H1 (cell line): ENCODE measurements at regions of chr5 and their contacts with region 1.

Region 1: DNA sequence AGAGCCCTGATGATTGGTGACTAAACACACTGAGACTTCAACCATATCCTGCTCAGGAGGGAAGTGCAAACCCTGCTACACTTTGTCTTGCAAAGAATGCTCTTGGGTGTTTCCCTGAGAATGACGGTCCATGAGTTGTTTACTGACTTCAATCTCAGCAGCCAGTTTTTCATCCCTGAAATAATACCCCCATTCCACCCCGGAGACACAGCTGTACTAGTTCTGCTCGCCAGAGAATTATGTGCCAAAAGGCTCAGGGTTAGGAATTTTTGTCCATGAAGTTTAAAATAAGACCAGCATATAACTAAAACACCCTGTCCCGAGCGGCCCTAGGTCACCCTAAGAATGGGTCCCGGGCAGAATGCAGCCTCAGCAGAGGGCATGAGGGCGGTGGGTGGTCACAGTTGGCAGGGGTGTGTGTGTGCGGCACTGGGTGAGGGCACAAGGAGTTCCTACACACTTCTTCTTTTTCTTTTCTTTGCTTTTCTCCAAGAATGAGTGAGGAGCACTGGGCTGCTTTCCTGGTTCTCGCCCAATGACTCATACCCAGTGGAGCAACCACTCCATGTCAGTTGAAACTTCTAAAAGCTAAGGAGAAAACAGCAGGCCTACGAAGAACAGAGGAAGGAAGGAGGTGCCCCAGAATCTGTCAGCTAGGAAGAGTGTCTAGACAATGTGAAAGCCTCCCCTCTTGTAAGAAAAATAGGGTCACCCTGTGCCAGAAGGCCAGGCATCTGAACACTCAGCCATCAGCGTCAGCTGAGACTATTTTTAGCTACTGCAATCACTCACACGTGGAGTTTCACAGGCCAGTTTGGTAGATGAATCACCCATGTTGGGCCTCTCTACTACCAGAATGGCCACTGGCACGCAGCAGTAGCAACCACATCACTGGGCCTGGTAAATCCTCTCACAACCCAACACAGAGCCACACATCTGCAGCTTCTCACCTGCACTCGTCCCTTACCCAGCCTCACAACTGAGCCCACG is 105.9 kb downstream of the DPYSL3 start:
- DNase-seq: no peak
- H3K4me3 ChIP-seq: no peak overlapping the region
- H3K27ac ChIP-seq: no peak overlapping the region
- H3K4me1 ChIP-seq: no peaks in the 10 kb centered on the region
- H3K27me3 ChIP-seq: no peaks in the 10 kb centered on the region
- CTCF ChIP-seq: no peak
- EP300 ChIP-seq: no peak
- POLR2A ChIP-seq: no peak
- RAD21 ChIP-seq: no peak

Region 2: DNA sequence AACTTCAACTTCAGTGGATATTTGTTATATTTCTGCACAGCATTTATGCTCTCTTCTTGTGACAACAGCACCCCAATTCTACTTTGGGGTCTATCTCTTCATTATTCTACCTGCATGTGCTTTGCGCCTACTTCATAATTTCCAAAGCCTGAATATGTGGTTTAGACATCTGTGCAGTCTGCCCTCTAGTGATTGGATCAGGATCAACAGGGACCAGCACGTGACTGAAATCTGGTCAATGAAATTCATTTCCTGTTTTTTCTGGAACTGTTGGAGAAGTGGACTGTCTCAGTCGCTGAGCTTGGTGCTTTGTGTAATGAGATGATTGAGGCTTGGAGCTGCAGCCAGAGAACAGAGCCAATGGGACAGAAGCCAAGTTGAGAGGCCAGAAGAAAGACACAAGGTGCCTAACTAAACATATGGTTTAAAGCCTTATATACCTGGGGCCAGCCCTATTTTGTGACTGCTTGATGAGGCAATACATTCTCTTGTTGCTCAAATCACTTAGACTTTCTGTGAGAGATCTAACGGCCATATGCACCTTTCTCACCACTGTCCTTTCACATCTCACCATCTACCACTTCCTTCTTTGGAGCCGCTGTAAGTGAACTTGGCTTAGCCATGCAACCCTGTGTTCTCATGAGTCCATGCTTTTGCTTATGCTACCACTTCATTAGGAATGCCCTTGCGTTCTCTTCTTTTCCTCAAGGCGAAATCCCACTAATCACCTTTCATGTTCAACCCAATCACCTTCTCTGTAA is 456.6 kb before region 1 on chr5:
- CTCF ChIA-PET with region 1: no interaction called
- POLR2A ChIA-PET with region 1: no interaction called
- DNase-seq: no peak
- H3K4me3 ChIP-seq: no peak overlapping the region
- H3K27ac ChIP-seq: no peak overlapping the region
- H3K4me1 ChIP-seq: peaks cover 0 to 3% (median 1%) of the 10 kb centered on the region in 4 experiments; a peak in 3 of 7 replicates
- H3K27me3 ChIP-seq: no peaks in the 10 kb centered on the region
- CTCF ChIP-seq: peak in 2 of 3 experiments; percentile 56 to 78; a peak in 3 of 4 replicates
- EP300 ChIP-seq: no peak
- POLR2A ChIP-seq: no peak
- RAD21 ChIP-seq: peak; percentile 70 to 75

Region 3: DNA sequence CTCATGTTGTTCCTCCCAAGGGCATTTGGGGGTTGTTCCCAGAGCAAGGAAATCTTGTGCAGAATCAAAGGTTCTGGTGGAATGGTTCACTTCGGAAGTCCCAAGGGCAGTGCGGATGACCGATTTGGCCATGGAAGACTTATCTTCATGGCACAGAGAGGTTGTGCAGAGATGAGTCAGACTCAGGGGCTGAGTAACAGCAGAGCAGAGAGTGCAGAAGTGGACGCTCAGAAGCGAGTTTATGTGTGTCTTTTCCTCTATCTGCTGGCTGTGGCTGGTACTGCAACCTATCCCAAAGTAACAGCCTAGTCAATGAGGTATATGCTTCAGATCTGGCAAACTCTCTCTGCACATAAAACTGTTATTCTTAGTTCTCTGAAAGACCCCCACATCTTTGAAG is 12.2 kb before region 1 on chr5:
- CTCF ChIA-PET with region 1: interaction called, 29 read pairs
- POLR2A ChIA-PET with region 1: interaction called, 6 read pairs
- DNase-seq: no peak
- H3K4me3 ChIP-seq: no peak overlapping the region
- H3K27ac ChIP-seq: no peak overlapping the region
- H3K4me1 ChIP-seq: peaks cover 4 to 10% (median 8%) of the 10 kb centered on the region in 4 experiments; a peak in 5 of 7 replicates
- H3K27me3 ChIP-seq: no peaks in the 10 kb centered on the region; a peak in 1 of 7 replicates
- CTCF ChIP-seq: peak; percentile 2 to 67 (median 16); a peak in 3 of 4 replicates
- EP300 ChIP-seq: no peak
- POLR2A ChIP-seq: peak in 1 of 2 experiments; percentile 45; a peak in 1 of 3 replicates
- RAD21 ChIP-seq: peak; percentile 50 to 65